ENCODE measurements at regions of chr6 and their contacts with region 1.

Region 1: GRCh38 chr6:157873735-157874344 is 50.8 kb downstream of the SNX9 start:
- DNase-seq: peak; percentile 93
- ATAC-seq: peak; percentile 86
- H3K4me3 Mint-ChIP-seq: no peak overlapping the region
- H3K27ac Mint-ChIP-seq: no peak overlapping the region
- H3K4me1 Mint-ChIP-seq: peaks cover 39% of the 10 kb centered on the region
- H3K27me3 Mint-ChIP-seq: no peaks in the 10 kb centered on the region
- CTCF ChIP-seq: peak; percentile 91

Region 2: GRCh38 chr6:157756708-157757429 is 117.0 kb before region 1 on chr6:
- CTCF ChIA-PET with region 1: interaction called, 66 read pairs
- POLR2A ChIA-PET with region 1: interaction called, 8 read pairs
- intact Hi-C with region 1: no loop called
- DNase-seq: peak; percentile 92
- ATAC-seq: peak; percentile 20
- H3K4me3 Mint-ChIP-seq: peak overlapping the region; percentile 11
- H3K27ac Mint-ChIP-seq: peak overlapping the region; percentile 89
- H3K4me1 Mint-ChIP-seq: peaks cover 89% of the 10 kb centered on the region
- H3K27me3 Mint-ChIP-seq: no peaks in the 10 kb centered on the region
- CTCF ChIP-seq: peak; percentile 83

Region 3: GRCh38 chr6:157845493-157846259 is 28.2 kb before region 1 on chr6:
- CTCF ChIA-PET with region 1: interaction called, 24 read pairs
- POLR2A ChIA-PET with region 1: interaction called, 7 read pairs
- intact Hi-C with region 1: no loop called
- DNase-seq: no peak
- ATAC-seq: peak; percentile 58
- H3K4me3 Mint-ChIP-seq: no peak overlapping the region
- H3K27ac Mint-ChIP-seq: peak overlapping the region; percentile 40
- H3K4me1 Mint-ChIP-seq: peaks cover 86% of the 10 kb centered on the region
- H3K27me3 Mint-ChIP-seq: no peaks in the 10 kb centered on the region
- CTCF ChIP-seq: no peak

Region 4: GRCh38 chr6:157885211-157885788 is 11.5 kb after region 1 on chr6:
- CTCF ChIA-PET with region 1: interaction called, 24 read pairs
- POLR2A ChIA-PET with region 1: interaction called, 3 read pairs
- intact Hi-C with region 1: no loop called
- DNase-seq: peak; percentile 84
- ATAC-seq: peak; percentile 89
- H3K4me3 Mint-ChIP-seq: peak overlapping the region; percentile 33
- H3K27ac Mint-ChIP-seq: peak overlapping the region; percentile 93
- H3K4me1 Mint-ChIP-seq: peaks cover 71% of the 10 kb centered on the region
- H3K27me3 Mint-ChIP-seq: no peaks in the 10 kb centered on the region
- CTCF ChIP-seq: no peak

Region 5: DNA sequence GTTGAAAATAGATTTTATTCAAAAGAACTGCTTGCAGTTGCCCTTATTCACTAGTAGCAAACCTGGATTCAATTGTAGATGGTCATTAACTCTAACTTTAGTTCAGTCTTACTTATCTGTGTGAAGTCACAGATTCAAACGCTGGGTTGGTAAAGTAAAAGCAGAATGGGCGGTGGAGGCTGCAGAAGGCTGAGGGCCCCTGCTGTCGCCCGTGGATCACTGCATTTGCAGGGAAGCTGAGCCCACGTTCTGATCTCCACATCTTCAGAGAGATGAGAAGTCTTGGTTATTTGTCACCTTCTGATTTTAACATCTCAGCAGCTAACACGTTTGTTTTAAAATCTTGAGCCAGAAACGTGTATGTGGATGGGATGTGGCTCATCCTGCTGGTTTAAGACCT is 24.3 kb after region 1 on chr6:
- CTCF ChIA-PET with region 1: interaction called, 16 read pairs
- POLR2A ChIA-PET with region 1: no interaction called
- intact Hi-C with region 1: no loop called
- DNase-seq: peak; percentile 47
- ATAC-seq: peak; percentile 54
- H3K4me3 Mint-ChIP-seq: no peak overlapping the region
- H3K27ac Mint-ChIP-seq: peak overlapping the region; percentile 25
- H3K4me1 Mint-ChIP-seq: peaks cover 19% of the 10 kb centered on the region
- H3K27me3 Mint-ChIP-seq: no peaks in the 10 kb centered on the region
- CTCF ChIP-seq: no peak

Region 6: DNA sequence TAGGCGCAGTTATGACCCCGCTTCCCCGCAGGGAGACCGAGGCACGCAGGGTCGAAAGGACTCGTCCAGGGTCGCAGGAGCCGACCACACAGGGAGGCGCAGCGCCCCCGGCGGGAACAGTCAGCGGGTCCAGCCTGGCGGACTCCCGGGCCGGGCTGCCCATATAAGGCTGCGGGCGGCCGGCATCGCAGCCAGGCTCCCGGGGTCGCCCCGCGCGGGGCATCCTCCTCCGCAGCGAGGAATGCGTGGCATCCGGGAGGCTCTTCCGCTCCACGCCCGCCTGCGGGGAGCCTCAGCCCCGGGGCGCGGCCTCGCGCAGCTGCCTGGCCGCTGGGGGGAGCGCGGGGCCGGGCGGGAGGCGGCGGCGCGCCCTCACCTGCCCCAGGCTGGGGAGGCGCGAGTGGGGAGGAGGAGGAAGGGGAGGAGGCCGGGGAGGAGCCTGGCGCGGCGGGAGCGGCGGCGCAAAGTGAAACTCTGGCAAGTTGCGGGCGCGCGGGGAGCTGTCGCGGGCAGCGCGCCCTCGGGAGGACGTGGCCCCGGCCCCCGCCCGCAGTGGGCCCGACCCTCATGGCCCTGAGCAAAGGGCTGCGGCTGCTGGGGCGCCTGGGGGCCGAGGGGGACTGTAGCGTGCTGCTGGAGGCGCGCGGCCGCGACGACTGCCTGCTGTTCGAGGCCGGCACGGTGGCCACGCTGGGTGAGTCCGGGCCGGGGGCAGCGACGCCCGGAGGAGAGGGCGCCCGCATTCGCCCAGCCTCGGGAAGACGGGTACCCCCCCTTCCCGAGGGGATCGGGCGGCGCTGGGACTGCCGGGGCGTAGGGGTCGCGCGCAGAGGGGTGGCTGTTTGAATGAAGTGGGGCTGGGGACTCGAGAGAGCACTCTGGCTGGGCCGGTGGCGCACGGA is 107.8 kb after region 1 on chr6 and contains the start of gene SYNJ2:
- CTCF ChIA-PET with region 1: no interaction called
- POLR2A ChIA-PET with region 1: no interaction called
- intact Hi-C with region 1: no loop called
- DNase-seq: peak; percentile 82
- ATAC-seq: peak; percentile 87
- H3K4me3 Mint-ChIP-seq: peak within 1 kb of the TSS; percentile 91
- H3K27ac Mint-ChIP-seq: peak within 1 kb of the TSS; percentile 85
- H3K4me1 Mint-ChIP-seq: peaks cover 42% of the 10 kb centered on the region
- H3K27me3 Mint-ChIP-seq: no peaks in the 10 kb centered on the region
- CTCF ChIP-seq: peak; percentile 73
- total RNA-seq, gene SYNJ2: 27.7 to 28.5 TPM

Measured in activated CD8-positive, alpha-beta T cell treated with anti-CD3 and anti-CD28 coated beads for 36 hours (primary cell).